AG04449 (cell line): ENCODE measurements at regions of chr9 and their contacts with region 1.

Region 1: DNA sequence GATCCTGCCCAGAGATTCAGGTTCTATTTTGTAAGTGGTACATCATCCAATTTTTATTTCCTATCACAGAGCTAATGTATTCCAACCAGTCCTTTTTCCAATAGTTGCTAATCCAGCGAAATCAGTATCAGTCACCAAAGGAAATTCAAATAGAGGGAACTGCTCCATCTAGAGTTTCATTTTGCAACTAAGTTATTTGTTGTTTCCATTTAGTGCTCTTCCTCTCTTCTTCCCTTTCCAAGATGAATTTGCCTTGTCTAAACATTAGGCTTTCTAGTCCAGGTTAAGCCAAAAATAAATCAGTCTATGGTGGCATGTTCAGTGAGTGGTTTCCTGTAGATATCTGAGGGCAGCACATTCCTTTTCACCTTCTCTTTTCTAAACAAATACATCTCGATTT is 79.8 kb upstream of the SPATA31D4 start:
- DNase-seq: no peak
- H3K4me3 ChIP-seq: no peak overlapping the region
- CTCF ChIP-seq: peak; percentile 37

Region 2: DNA sequence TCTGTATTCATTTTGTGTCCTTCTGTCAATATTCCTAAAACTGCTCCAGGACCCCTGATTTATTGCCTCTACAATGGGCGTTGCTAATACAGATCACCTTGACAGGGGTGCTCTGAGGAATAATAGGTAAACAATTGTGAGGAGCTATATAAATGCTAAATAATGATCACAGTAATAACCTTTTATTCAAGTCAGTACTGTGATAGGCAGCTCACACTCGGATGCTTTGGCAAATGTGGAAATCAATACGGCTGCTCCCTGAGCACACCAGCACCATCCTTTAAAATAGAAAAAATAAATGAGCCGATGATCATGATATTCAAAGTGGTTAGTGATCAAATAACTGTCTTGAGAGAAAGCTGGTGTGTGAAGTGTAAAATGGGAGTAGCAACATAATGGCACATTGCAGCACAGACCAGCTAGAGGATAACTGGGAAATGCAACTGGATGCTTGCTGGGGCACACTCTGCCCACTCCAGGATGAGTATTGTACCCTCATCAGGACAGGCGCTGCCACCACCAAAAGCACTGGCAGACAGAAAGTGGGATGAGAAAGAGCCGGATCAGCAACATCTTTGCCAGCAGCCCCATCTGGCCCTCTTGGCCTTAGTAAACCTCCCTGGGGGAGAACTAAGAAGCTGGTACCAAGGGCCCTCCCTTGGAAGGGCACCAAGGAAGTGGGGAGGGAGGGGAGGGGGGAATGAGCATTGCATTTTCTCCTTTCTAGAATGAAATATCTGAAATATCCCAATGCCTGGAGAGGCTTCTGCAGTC is 10.4 kb after region 1 on chr9:
- CTCF ChIA-PET with region 1: interaction called, 22 read pairs
- POLR2A ChIA-PET with region 1: no interaction called
- DNase-seq: no peak
- H3K4me3 ChIP-seq: no peak overlapping the region
- CTCF ChIP-seq: no peak